Transverse colon (tissue), 4 donors: ENCODE measurements at regions of chr15 and their contacts with region 1.

Region 1: DNA sequence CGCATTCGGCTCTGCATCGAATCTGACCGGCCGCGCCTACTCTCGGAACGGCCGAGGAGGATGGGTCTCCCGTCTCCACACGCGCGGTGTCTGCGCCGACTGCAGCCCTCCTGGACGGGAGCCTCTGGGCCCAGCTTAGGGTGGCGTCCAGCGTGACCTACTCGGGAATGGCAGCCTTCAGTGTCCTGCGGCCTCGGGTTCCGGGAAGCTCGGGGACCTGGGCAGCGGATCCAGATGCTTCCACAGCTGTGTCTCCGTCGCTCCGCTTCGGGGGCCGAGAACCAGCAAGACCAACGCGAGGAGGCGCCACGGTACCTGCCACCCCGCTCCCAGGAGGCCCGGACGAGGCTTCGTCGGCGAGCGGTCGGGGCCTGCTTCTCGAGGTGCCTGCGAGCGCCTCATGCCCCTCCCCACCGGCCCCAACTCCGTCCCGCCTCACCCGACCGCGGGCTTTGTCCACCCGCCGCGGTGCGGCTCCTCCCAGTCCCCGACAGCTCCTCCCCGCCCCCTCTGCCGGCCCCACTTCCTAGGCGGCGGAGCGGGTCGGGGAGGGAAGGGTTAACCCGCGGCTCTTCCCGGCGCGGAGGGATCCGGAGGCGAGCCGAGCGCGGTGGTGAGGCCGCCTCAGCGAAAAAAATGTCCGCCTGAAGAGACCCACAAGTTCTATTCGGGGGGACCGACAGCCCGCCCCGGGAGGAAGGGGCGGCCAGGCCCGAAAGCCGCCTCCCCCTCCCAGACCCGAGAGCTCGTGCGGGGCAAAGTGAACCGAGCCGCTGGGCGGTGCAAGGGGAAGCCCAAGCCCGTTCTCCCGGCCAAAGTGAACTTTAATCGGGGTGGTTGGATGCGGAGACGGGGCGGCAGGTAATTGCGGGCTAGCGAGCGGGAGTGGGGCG is at the start of gene TCF12:
- DNase-seq: peak; percentile 95
- H3K4me3 ChIP-seq: peak within 1 kb of the TSS; percentile 85 to 99 (median 91)
- H3K27ac ChIP-seq: peak within 1 kb of the TSS; percentile 96 to 99 (median 98)
- H3K4me1 ChIP-seq: peaks cover 0 to 48% (median 26%) of the 10 kb centered on the region in 4 donors
- H3K27me3 ChIP-seq: no peaks in the 10 kb centered on the region
- CTCF ChIP-seq: peak; percentile 24 to 55 (median 42)
- EP300 ChIP-seq: no peak
- POLR2A ChIP-seq: peak; percentile 72
- total RNA-seq, gene TCF12: 105 to 446 (median 180) TPM

Region 2: DNA sequence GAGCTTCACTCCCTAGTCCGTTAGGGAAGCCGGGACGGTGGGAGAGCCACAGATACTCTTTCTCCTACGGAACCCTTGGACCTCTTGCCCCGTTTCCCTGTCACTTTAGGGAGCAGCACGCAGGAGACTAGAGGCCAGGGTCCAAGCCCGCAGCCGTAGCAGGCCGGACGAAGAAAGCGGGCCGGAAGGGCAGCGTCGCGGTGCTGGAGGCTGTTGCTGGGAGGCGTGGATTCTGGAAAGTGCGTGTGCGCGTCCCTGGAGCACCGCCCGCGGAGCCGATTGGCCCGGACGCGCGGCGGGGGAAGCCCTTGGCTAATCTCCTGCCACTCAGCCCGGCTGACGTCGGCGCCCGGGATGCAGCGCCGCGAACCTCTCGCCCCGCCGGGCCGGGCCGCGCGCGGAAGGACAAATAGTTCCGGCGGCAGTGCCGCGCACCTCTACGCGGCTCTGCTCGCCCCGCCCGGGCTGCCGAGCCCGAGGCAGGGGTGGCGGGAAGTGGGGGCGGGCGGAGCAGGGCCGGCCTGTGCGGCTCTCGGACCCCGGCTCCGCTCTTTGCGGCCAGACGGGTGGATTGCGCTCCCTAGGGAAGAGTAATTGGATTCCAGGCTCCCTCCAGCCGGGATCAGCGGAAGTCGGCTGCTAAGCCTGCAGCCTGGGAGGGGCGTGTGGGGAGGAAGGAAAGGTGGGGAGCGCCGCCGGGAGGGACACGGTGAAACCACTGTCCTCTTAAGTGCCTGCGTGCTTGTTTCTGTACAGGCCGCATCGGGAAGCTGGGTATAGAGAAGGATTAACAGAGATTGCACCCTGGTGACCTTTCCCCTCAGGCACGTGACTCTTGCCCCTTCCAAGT is 31.1 kb before region 1 on chr15:
- in situ Hi-C with region 1: no loop called
- intact Hi-C with region 1: loop called (anchors 2 kb)
- DNase-seq: peak; percentile 95
- H3K4me3 ChIP-seq: peak overlapping the region; percentile 64 to 82 (median 66)
- H3K27ac ChIP-seq: peak overlapping the region; percentile 97 to 99 (median 98)
- H3K4me1 ChIP-seq: peaks cover 11 to 22% (median 17%) of the 10 kb centered on the region in 4 donors
- H3K27me3 ChIP-seq: no peaks in the 10 kb centered on the region
- CTCF ChIP-seq: no peak
- EP300 ChIP-seq: no peak
- POLR2A ChIP-seq: peak; percentile 91

Region 3: GRCh38 chr15:57138349-57138788 is 220.1 kb after region 1 on chr15:
- in situ Hi-C with region 1: loop called in 2 of 4 experiments (anchors 10 to 25 kb)
- intact Hi-C with region 1: no loop called
- DNase-seq: peak; percentile 26
- H3K4me3 ChIP-seq: no peak overlapping the region
- H3K27ac ChIP-seq: no peak overlapping the region
- H3K4me1 ChIP-seq: peaks cover 0 to 16% (median 2%) of the 10 kb centered on the region in 4 donors
- H3K27me3 ChIP-seq: no peaks in the 10 kb centered on the region
- CTCF ChIP-seq: peak; percentile 69 to 80 (median 70)
- EP300 ChIP-seq: no peak
- POLR2A ChIP-seq: no peak